Naive thymus-derived CD8-positive, alpha-beta T cell (primary cell): ENCODE measurements at regions of chr11 and their contacts with region 1.

Region 1: GRCh38 chr11:83156150-83156995 is 558 bp upstream of the PCF11 start:
- DNase-seq: peak in 9 of 10 donors; percentile 87 to 99 (median 98)
- ATAC-seq: peak; percentile 86 to 88
- H3K4me3 Mint-ChIP-seq: peak overlapping the region; percentile 93 to 100 (median 100)
- H3K27ac Mint-ChIP-seq: peak overlapping the region; percentile 99 to 100 (median 100)
- H3K4me1 Mint-ChIP-seq: peaks cover 10 to 27% (median 25%) of the 10 kb centered on the region in 4 donors
- H3K27me3 Mint-ChIP-seq: no peaks in the 10 kb centered on the region

Region 2: DNA sequence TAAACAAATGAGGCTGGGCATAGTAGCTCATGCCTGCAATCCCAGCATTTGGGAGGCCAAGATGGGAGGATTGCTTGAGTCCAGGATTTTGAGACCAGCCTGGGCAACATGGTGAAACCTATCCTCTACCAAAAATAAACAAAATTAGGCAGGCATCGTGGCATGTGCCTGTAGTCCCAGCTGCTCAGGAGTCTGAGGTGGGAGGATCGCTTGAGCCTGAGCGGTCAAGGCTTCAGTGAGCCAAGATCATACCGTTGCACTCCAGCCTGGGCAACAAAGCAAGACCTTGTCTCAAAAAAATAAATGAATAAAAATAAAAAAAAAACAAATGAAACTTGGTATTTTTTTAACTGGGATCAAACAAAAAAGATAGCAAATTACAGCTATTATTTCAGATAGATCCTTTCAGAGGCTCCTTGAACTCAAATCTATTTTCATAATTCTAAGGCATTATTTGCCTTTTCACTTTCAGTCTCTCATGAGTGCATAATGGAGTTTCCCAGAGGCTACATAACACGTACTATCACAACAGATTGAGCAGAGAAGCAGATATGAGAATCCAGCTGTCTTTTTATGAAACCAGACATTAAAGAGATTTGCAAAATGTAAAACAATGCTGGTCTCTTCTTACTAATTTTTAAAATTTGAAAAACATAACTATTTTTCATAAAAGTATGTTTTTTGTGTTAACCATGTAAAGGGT is 231.7 kb before region 1 on chr11:
- POLR2A ChIA-PET with region 1: interaction called, 15 read pairs
- DNase-seq: no peak
- ATAC-seq: no peak
- H3K4me3 Mint-ChIP-seq: no peak overlapping the region
- H3K27ac Mint-ChIP-seq: peak overlapping the region in 1 of 10 donors; percentile 2
- H3K4me1 Mint-ChIP-seq: peaks cover 24 to 62% (median 52%) of the 10 kb centered on the region in 4 donors
- H3K27me3 Mint-ChIP-seq: no peaks in the 10 kb centered on the region

Region 3: GRCh38 chr11:83063073-83063754 is 93.2 kb before region 1 on chr11:
- POLR2A ChIA-PET with region 1: interaction called, 21 read pairs
- DNase-seq: peak in 4 of 10 donors; percentile 31 to 68 (median 55)
- ATAC-seq: peak; percentile 86 to 92
- H3K4me3 Mint-ChIP-seq: peak overlapping the region; percentile 77 to 93 (median 88)
- H3K27ac Mint-ChIP-seq: peak overlapping the region; percentile 93 to 99 (median 97)
- H3K4me1 Mint-ChIP-seq: peaks cover 19 to 79% (median 59%) of the 10 kb centered on the region in 4 donors
- H3K27me3 Mint-ChIP-seq: no peaks in the 10 kb centered on the region

Region 4: GRCh38 chr11:83115551-83115950 is 40.8 kb before region 1 on chr11:
- POLR2A ChIA-PET with region 1: interaction called, 43 read pairs
- DNase-seq: no peak
- ATAC-seq: no peak
- H3K4me3 Mint-ChIP-seq: peak overlapping the region; percentile 27 to 96 (median 73)
- H3K27ac Mint-ChIP-seq: peak overlapping the region; percentile 15 to 92 (median 58)
- H3K4me1 Mint-ChIP-seq: peaks cover 20 to 60% (median 50%) of the 10 kb centered on the region in 4 donors
- H3K27me3 Mint-ChIP-seq: no peaks in the 10 kb centered on the region

Region 5: DNA sequence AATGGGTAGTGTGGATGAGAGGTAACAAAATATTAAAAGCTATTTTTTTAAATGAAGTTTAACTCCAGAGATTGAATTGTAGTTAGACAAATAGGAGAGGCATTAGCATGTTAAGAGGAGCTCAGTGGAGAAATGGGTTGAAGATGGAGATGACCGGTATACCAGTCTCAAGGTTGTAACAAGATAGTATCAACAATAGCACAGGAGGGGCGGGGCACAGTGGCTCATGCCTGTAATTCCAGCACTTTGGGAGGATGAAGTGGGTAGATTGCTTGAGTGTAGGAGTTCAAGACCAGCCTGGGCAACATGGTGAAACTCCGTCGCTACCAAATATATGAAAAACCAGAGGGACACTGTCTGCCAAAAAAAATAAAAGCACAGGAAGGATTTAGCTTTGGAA is 31.1 kb after region 1 on chr11:
- POLR2A ChIA-PET with region 1: interaction called, 30 read pairs
- DNase-seq: no peak
- ATAC-seq: no peak
- H3K4me3 Mint-ChIP-seq: no peak overlapping the region
- H3K27ac Mint-ChIP-seq: peak overlapping the region; percentile 3 to 89 (median 40)
- H3K4me1 Mint-ChIP-seq: peaks cover 8 to 21% (median 17%) of the 10 kb centered on the region in 4 donors
- H3K27me3 Mint-ChIP-seq: no peaks in the 10 kb centered on the region